ENCODE measurements at regions of chr10 and their contacts with region 1.

Region 1: GRCh38 chr10:37976091-37976879 is at the start of gene ZNF25:
- DNase-seq: peak; percentile 99
- ATAC-seq: peak; percentile 99
- total RNA-seq, gene ZNF25: 15.9 TPM

Region 2: GRCh38 chr10:37774351-37774750 is 201.9 kb before region 1 on chr10:
- intact Hi-C with region 1: no loop called
- DNase-seq: no peak
- ATAC-seq: no peak

Region 3: DNA sequence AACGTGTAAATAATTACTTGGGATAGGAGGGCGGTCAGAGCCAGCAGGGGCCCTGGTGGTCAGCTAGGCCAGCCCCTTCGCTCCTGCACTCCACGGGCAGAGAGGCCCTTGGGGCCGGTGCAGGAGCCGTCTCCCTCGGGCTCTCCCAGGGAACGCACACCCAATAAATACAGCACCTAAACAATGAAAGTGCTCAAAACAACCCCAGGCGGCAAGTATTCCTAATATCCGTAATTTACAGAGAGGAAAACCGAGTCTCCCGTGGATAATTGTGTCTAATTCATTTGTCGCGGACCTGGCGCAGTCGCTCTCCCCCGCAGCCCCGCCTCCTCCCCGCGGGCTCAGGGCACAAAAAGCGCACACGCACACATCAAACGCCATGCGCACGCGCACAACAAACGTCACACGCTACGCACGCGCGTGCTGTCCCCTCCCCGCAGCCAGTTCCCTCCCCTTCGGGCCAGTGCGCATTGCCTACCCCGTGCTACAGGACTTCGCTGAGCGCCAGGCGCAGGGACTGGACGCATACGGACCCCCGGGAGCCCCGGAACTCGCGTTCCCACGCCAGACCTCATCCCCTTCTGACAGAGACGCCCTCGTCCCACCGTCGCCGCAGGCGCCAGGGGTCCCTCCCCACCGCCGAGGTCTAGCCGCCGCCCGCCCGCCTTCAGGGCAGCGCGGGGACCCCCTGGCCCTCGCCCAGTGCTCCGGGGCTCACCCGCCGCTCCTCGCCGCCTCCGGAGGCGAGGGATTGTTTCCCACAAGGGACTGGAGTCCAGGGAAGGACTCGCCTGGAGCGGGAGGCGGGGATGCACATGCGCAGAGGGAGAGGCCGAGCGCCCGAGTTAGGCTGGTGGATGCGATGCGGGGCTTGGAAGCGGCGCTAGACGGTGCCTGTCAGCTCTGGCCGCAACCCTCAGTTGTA is 118.7 kb before region 1 on chr10 and contains the start of gene ZNF248:
- intact Hi-C with region 1: loop called (anchors 10 kb)
- DNase-seq: peak; percentile 98
- ATAC-seq: peak; percentile 100
- total RNA-seq, gene ZNF248: 11.4 TPM

Region 4: DNA sequence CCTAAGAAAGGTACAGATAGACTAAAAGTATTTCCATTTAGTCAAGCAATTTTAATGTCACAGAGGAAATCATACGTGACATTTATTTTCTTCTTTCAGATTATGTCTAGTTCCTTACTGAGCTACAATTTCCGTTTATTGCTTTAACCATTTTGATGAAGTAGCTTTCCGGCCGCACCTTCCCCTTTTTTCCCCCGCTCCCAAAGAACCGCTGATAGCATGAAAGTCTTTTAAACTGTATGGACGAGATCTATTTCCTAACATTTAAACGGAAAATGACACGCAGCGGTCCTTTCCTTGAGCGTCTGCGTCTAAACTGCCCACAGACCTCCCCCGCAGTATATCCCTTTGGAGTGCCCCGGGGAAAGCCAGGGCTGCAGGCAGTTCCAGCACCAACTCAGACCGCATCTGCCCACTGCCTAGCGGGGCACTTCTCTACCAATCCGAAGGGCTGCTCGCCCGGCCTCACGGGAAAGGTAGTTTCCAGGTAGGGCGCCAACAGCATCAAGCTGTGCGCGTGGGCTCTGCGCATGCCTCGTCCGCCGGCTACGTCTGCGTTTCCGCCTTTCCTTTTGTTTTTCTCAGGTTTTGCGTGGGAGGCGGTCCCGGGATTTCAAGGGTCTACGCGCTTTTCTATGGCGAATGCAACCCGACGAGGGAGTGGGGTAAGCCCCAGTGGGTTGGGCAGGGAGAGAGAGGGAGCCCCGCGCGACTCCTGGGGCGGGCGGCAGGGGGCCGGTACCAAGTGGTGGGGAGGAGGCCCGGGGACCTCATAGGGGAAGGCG is 34.0 kb after region 1 on chr10 and contains the start of gene ZNF33A:
- intact Hi-C with region 1: loop called (anchors 2 kb)
- DNase-seq: peak; percentile 94
- ATAC-seq: peak; percentile 97
- total RNA-seq, gene ZNF33A: 19.1 TPM

Region 5: DNA sequence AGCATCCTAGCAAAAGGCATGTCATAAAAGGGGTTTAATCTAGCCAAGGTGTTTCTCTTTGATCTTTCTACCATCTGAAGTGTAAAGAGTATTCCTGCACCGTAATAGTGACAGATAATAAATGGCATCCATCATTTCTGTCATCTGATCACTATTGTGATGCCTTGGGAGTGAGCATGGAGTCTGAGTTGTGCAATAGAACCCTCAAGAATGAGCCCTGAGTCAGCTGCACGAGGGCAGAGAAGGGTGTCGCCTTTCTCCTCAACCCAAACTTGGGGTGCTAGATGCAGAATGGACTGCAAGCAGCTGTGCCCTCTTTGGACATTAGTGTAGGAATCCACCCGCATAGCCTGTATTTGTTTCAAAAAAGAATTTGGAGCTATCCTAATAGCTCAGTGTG is 233.0 kb after region 1 on chr10:
- intact Hi-C with region 1: no loop called
- DNase-seq: no peak
- ATAC-seq: no peak

Measured in Right ventricle myocardium superior (tissue), 1 donor.